Activated T-helper 2 cell treated with anti-CD3 and anti-CD28 coated beads, Interferon-gamma antibody, Interleukin-2, Interleukin-4, amounts not matched to agents 10 μg/mL and 5 μg/mL and 100 μg/mL, durations not matched to agents 14 hours and 24 hours and 36 hours (primary cell): ENCODE measurements at regions of chr11 and their contacts with region 1.

Region 1: DNA sequence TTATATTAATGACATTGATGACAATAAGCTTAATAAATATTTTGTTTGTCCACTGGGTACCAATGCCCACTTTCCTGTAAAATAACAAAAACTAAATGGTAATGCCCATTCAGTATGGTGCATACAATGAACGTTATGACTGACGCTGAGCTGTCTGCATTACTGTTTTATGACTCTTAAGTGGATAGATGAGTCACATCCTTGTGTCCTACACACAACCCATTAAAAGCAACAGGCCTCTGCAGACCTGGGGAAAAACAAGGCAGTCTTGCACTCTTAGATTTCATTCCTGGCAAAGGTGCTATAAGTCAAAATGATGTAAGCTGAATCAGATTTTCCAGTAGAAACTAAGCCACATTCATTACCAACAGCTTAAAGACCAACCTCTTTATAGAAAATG is 176.3 kb upstream of the TMEM45B start:
- DNase-seq: no peak
- H3K4me3 Mint-ChIP-seq: no peak overlapping the region
- H3K27ac Mint-ChIP-seq: peak overlapping the region; percentile 85
- H3K4me1 Mint-ChIP-seq: peaks cover 68% of the 10 kb centered on the region
- H3K27me3 Mint-ChIP-seq: no peaks in the 10 kb centered on the region

Region 2: GRCh38 chr11:129249351-129249750 is 389.9 kb before region 1 on chr11:
- intact Hi-C with region 1: no loop called
- DNase-seq: no peak
- H3K4me3 Mint-ChIP-seq: no peak overlapping the region
- H3K27ac Mint-ChIP-seq: no peak overlapping the region
- H3K4me1 Mint-ChIP-seq: peaks cover 39% of the 10 kb centered on the region
- H3K27me3 Mint-ChIP-seq: peaks cover 2% of the 10 kb centered on the region

Region 3: GRCh38 chr11:129447654-129448239 is 191.6 kb before region 1 on chr11:
- intact Hi-C with region 1: loop called (anchors 1 kb)
- DNase-seq: no peak
- H3K4me3 Mint-ChIP-seq: no peak overlapping the region
- H3K27ac Mint-ChIP-seq: peak overlapping the region; percentile 88
- H3K4me1 Mint-ChIP-seq: peaks cover 27% of the 10 kb centered on the region
- H3K27me3 Mint-ChIP-seq: no peaks in the 10 kb centered on the region

Region 4: GRCh38 chr11:129681344-129682114 is 42.2 kb after region 1 on chr11:
- intact Hi-C with region 1: loop called (anchors 5 kb)
- DNase-seq: no peak
- H3K4me3 Mint-ChIP-seq: no peak overlapping the region
- H3K27ac Mint-ChIP-seq: no peak overlapping the region
- H3K4me1 Mint-ChIP-seq: peaks cover 10% of the 10 kb centered on the region
- H3K27me3 Mint-ChIP-seq: peaks cover 1% of the 10 kb centered on the region

Region 5: DNA sequence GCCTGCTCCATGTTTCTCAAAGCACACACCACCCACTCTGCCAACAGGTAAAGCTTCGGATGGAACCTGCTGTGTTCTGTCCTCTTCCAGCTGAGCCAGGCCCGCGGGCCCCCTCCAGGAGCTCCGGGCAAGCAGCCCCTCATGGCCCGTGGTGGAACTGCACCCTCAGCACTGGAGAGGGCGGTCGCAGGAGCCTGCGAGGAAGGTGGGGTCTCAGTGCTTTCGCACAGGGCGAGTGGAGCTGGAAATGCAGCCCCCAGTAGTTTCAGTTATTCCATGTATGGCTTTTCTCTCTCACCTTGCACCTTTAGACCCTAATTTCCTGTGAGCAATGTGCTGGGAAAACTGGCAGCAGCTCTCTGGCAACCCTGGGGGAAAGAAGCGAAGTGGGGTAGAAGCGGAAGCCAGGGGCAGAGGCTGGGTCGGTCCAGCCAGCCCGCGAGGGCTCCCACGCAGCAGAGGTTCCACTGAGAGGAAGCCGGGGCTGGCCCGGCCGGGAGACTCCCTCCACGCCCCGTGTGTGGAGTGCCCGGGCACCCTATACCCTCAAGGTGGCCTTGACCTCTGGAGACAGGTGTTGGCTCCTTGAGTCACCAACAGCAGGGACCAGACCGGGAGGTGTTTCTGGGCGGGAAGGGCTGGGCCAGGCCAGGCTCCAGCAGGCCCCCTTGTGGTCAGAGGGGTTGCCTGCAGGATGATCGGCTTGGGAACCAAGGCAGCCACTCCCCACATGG is 56.4 kb after region 1 on chr11:
- intact Hi-C with region 1: loop called (anchors 2 kb)
- DNase-seq: peak; percentile 41
- H3K4me3 Mint-ChIP-seq: peak overlapping the region; percentile 54
- H3K27ac Mint-ChIP-seq: no peak overlapping the region
- H3K4me1 Mint-ChIP-seq: peaks cover 11% of the 10 kb centered on the region
- H3K27me3 Mint-ChIP-seq: peaks cover 3% of the 10 kb centered on the region